A549 (cell line): ENCODE measurements at regions of chr3 and their contacts with region 1.

Region 1: GRCh38 chr3:197256836-197257444 is 41.5 kb downstream of the DLG1 start:
- DNase-seq: peak in 1 of 2 experiments; percentile 46
- ATAC-seq: no peak
- H3K4me3 ChIP-seq: no peak overlapping the region
- H3K27ac ChIP-seq: no peak overlapping the region
- H3K4me1 ChIP-seq: peaks cover 19% of the 10 kb centered on the region; the same call in 2 of the 3 replicates
- CTCF ChIP-seq: peak; percentile 62
- EP300 ChIP-seq: no peak
- POLR2A ChIP-seq: no peak
- RAD21 ChIP-seq: peak; percentile 40 to 69

Region 2: DNA sequence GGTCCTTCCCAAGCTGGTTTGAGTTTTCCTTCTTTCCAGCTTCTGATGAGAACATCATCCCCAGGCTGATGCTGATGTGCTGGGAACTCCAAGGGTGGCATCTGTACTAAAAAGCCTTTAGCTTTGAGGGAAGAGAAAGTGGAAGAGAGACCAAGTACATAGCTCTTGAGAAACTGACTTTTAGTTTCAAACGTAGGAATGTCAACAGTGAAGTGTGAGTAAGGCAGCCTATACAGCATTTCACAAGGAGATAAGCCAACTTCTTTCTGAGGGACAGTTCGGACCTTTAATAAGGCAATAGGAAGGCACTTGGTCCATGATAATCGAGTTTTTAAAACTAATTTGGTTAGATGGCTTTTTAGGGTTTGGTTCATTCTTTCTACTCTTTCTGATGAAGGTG is 12.2 kb before region 1 on chr3:
- CTCF ChIA-PET with region 1: interaction called, 25 read pairs
- POLR2A ChIA-PET with region 1: no interaction called
- DNase-seq: no peak
- ATAC-seq: no peak
- H3K4me3 ChIP-seq: no peak overlapping the region
- H3K27ac ChIP-seq: no peak overlapping the region
- H3K4me1 ChIP-seq: no peaks in the 10 kb centered on the region
- CTCF ChIP-seq: no peak
- EP300 ChIP-seq: no peak
- POLR2A ChIP-seq: no peak
- RAD21 ChIP-seq: no peak

Region 3: GRCh38 chr3:197268294-197268693 is 11.4 kb after region 1 on chr3:
- CTCF ChIA-PET with region 1: interaction called, 13 read pairs
- POLR2A ChIA-PET with region 1: no interaction called
- DNase-seq: no peak
- ATAC-seq: no peak
- H3K4me3 ChIP-seq: no peak overlapping the region
- H3K27ac ChIP-seq: no peak overlapping the region
- H3K4me1 ChIP-seq: peaks cover 21% of the 10 kb centered on the region
- CTCF ChIP-seq: no peak
- EP300 ChIP-seq: no peak
- POLR2A ChIP-seq: no peak
- RAD21 ChIP-seq: no peak

Region 4: GRCh38 chr3:197456261-197457091 is 199.5 kb after region 1 on chr3:
- CTCF ChIA-PET with region 1: interaction called, 18 read pairs
- POLR2A ChIA-PET with region 1: no interaction called
- DNase-seq: peak; percentile 28 to 35
- ATAC-seq: peak; percentile 73 to 79
- H3K4me3 ChIP-seq: peak overlapping the region; percentile 46
- H3K27ac ChIP-seq: peak overlapping the region; percentile 85 to 94
- H3K4me1 ChIP-seq: peaks cover 23% of the 10 kb centered on the region; the same call in 2 of the 3 replicates
- CTCF ChIP-seq: no peak
- EP300 ChIP-seq: no peak
- POLR2A ChIP-seq: no peak
- RAD21 ChIP-seq: no peak

Region 5: GRCh38 chr3:197501879-197502620 is 245.1 kb after region 1 on chr3:
- CTCF ChIA-PET with region 1: interaction called, 16 read pairs
- POLR2A ChIA-PET with region 1: no interaction called
- DNase-seq: peak in 1 of 2 experiments; percentile 28
- ATAC-seq: peak in 1 of 2 experiments; percentile 37; a peak in 2 of 6 replicates
- H3K4me3 ChIP-seq: no peak overlapping the region
- H3K27ac ChIP-seq: peak overlapping the region in 1 of 2 experiments; percentile 58; a peak in 2 of 6 replicates
- H3K4me1 ChIP-seq: peaks cover 19% of the 10 kb centered on the region
- CTCF ChIP-seq: peak; percentile 11; the same call in 2 of the 3 replicates
- EP300 ChIP-seq: no peak
- POLR2A ChIP-seq: no peak
- RAD21 ChIP-seq: peak in 1 of 2 experiments; percentile 43; a peak in 3 of 5 replicates

Region 6: GRCh38 chr3:197511130-197511529 is 254.2 kb after region 1 on chr3:
- CTCF ChIA-PET with region 1: interaction called, 37 read pairs
- POLR2A ChIA-PET with region 1: no interaction called
- DNase-seq: no peak
- ATAC-seq: peak in 1 of 2 experiments; percentile 9; a peak in 2 of 6 replicates
- H3K4me3 ChIP-seq: no peak overlapping the region
- H3K27ac ChIP-seq: peak overlapping the region; percentile 17 to 87; a peak in 2 of 6 replicates
- H3K4me1 ChIP-seq: peaks cover 19% of the 10 kb centered on the region; the same call in 2 of the 3 replicates
- CTCF ChIP-seq: no peak
- EP300 ChIP-seq: no peak
- POLR2A ChIP-seq: no peak
- RAD21 ChIP-seq: no peak